ENCODE measurements at regions of chr7 and their contacts with region 1.

Region 1: GRCh38 chr7:5532520-5533335 is 109.1 kb upstream of the TNRC18 start:
- DNase-seq: peak in 10 of 14 experiments; percentile 30 to 71 (median 61)
- ATAC-seq: no peak
- H3K4me3 ChIP-seq: peak overlapping the region; percentile 99
- H3K4me3 Mint-ChIP-seq: peak overlapping the region; percentile 91
- H3K27ac ChIP-seq: peak overlapping the region; percentile 80 to 84
- H3K27ac Mint-ChIP-seq: peak overlapping the region; percentile 95
- H3K4me1 ChIP-seq: peaks cover 47% of the 10 kb centered on the region
- H3K4me1 Mint-ChIP-seq: peaks cover 32% of the 10 kb centered on the region
- H3K27me3 ChIP-seq: no peaks in the 10 kb centered on the region
- H3K27me3 Mint-ChIP-seq: peaks cover 4% of the 10 kb centered on the region
- CTCF ChIP-seq: no peak

Region 2: GRCh38 chr7:5557920-5558401 is 25.2 kb after region 1 on chr7:
- CTCF ChIA-PET with region 1: interaction called, 8 read pairs
- POLR2A ChIA-PET with region 1: interaction called, 4 read pairs
- intact Hi-C with region 1: loop called in 1 of 2 experiments (anchors 1 kb)
- DNase-seq: peak in 3 of 14 experiments; percentile 47 to 62 (median 47)
- ATAC-seq: no peak
- H3K4me3 ChIP-seq: peak overlapping the region; percentile 40
- H3K4me3 Mint-ChIP-seq: peak overlapping the region; percentile 88
- H3K27ac ChIP-seq: peak overlapping the region; percentile 57 to 82
- H3K27ac Mint-ChIP-seq: peak overlapping the region; percentile 79
- H3K4me1 ChIP-seq: peaks cover 66% of the 10 kb centered on the region
- H3K4me1 Mint-ChIP-seq: peaks cover 44% of the 10 kb centered on the region
- H3K27me3 ChIP-seq: peaks cover 0 to 2% of the 10 kb centered on the region in 2 experiments
- H3K27me3 Mint-ChIP-seq: peaks cover 6% of the 10 kb centered on the region
- CTCF ChIP-seq: no peak

Measured in CD4-positive, alpha-beta T cell (primary cell).